SK-N-SH (cell line): ENCODE measurements at regions of chr1 and their contacts with region 1.

Region 1: DNA sequence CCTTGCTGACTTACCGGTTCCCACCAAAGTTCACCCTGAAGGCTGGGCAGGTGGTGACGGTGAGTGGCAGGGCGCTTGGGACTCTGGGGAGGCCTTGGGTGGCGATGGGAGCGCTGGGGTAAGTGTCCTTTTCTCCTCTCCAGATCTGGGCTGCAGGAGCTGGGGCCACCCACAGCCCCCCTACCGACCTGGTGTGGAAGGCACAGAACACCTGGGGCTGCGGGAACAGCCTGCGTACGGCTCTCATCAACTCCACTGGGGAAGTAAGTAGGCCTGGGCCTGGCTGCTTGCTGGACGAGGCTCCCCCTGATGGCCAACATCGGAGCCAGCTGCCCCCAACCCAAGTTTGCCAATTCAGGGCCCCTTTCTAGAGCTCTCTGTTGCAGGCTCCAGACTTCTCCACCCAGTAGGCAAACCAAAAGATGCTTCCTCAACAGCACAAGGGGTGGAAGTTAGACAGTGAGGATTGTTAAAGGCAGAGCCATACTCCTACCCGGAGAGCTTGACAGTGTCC is 16.4 kb upstream of the SEMA4A start:
- DNase-seq: no peak
- H3K4me3 ChIP-seq: no peak overlapping the region
- H3K27ac ChIP-seq: peak overlapping the region in 1 of 2 experiments; percentile 24; a peak in 1 of 4 replicates
- H3K4me1 ChIP-seq: no peaks in the 10 kb centered on the region
- H3K27me3 ChIP-seq: no peaks in the 10 kb centered on the region
- CTCF ChIP-seq: peak; percentile 39
- EP300 ChIP-seq: no peak
- RAD21 ChIP-seq: no peak

Region 2: DNA sequence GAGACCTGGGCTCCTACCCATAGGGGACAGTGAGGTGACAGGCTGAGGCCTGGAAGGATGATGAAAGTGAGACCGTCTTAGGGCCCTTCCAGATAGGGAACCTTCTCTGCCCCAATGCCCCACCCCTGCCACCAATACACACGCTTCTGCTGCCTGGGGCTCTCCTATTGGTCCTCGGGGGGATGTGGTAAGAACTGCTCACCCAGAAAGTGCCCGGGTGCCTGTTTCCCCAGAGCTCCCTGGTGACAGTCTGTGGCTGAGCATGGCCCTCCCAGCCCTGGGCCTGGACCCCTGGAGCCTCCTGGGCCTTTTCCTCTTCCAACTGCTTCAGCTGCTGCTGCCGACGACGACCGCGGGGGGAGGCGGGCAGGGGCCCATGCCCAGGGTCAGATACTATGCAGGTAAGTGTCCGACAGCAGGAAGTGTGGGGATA is 17.3 kb after region 1 on chr1:
- CTCF ChIA-PET with region 1: interaction called, 15 read pairs
- POLR2A ChIA-PET with region 1: no interaction called
- DNase-seq: no peak
- H3K4me3 ChIP-seq: no peak overlapping the region
- H3K27ac ChIP-seq: no peak overlapping the region
- H3K4me1 ChIP-seq: no peaks in the 10 kb centered on the region
- H3K27me3 ChIP-seq: no peaks in the 10 kb centered on the region
- CTCF ChIP-seq: no peak
- EP300 ChIP-seq: no peak
- RAD21 ChIP-seq: no peak

Region 3: GRCh38 chr1:156268336-156268735 is 131.3 kb after region 1 on chr1:
- CTCF ChIA-PET with region 1: no interaction called
- POLR2A ChIA-PET with region 1: no interaction called
- DNase-seq: no peak
- H3K4me3 ChIP-seq: no peak overlapping the region
- H3K27ac ChIP-seq: no peak overlapping the region
- H3K4me1 ChIP-seq: peaks cover 0 to 3% of the 10 kb centered on the region in 2 experiments; a peak in 2 of 4 replicates
- H3K27me3 ChIP-seq: no peaks in the 10 kb centered on the region
- CTCF ChIP-seq: no peak
- EP300 ChIP-seq: no peak
- RAD21 ChIP-seq: no peak